Mammary epithelial cell (primary cell): ENCODE measurements at regions of chr11 and their contacts with region 1.

Region 1: GRCh38 chr11:78525709-78526108 is 49.0 kb downstream of the NARS2 start:
- DNase-seq: no peak
- H3K4me3 ChIP-seq: no peak overlapping the region
- H3K27ac ChIP-seq: no peak overlapping the region
- H3K4me1 ChIP-seq: no peaks in the 10 kb centered on the region
- H3K27me3 ChIP-seq: no peaks in the 10 kb centered on the region
- CTCF ChIP-seq: no peak

Region 2: DNA sequence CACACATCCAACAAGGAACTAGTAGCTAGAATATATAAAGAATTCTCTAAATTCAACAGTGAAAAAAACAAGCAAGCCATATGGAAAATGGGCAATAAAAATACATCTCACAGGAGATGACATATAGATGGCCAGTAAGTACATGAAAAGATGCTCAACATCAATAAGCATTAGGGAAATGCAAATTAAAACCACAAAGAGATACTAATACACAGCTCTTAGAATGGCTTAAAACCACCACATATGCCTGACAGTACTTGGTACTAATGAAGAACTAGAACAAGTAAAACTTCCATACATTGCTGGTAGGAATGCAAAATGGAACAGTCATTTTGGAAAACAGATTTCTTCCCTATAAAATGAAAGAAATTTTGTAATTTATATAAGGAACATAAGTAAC is 36.5 kb before region 1 on chr11:
- CTCF ChIA-PET with region 1: interaction called, 25 read pairs
- dilution Hi-C with region 1: no loop called
- in situ Hi-C with region 1: no loop called
- intact Hi-C with region 1: no loop called
- DNase-seq: no peak
- H3K4me3 ChIP-seq: no peak overlapping the region
- H3K27ac ChIP-seq: no peak overlapping the region
- H3K4me1 ChIP-seq: no peaks in the 10 kb centered on the region
- H3K27me3 ChIP-seq: no peaks in the 10 kb centered on the region
- CTCF ChIP-seq: no peak

Region 3: GRCh38 chr11:78549624-78550409 is 24.1 kb after region 1 on chr11:
- CTCF ChIA-PET with region 1: no interaction called
- dilution Hi-C with region 1: no loop called
- in situ Hi-C with region 1: no loop called
- intact Hi-C with region 1: no loop called
- DNase-seq: no peak
- H3K4me3 ChIP-seq: no peak overlapping the region
- H3K27ac ChIP-seq: no peak overlapping the region
- H3K4me1 ChIP-seq: no peaks in the 10 kb centered on the region
- H3K27me3 ChIP-seq: no peaks in the 10 kb centered on the region
- CTCF ChIP-seq: no peak

Region 4: GRCh38 chr11:78595436-78596130 is 69.9 kb after region 1 on chr11:
- CTCF ChIA-PET with region 1: no interaction called
- dilution Hi-C with region 1: no loop called
- in situ Hi-C with region 1: no loop called
- intact Hi-C with region 1: no loop called
- DNase-seq: no peak
- H3K4me3 ChIP-seq: no peak overlapping the region
- H3K27ac ChIP-seq: no peak overlapping the region
- H3K4me1 ChIP-seq: peaks cover 16% of the 10 kb centered on the region
- H3K27me3 ChIP-seq: no peaks in the 10 kb centered on the region
- CTCF ChIP-seq: no peak

Region 5: DNA sequence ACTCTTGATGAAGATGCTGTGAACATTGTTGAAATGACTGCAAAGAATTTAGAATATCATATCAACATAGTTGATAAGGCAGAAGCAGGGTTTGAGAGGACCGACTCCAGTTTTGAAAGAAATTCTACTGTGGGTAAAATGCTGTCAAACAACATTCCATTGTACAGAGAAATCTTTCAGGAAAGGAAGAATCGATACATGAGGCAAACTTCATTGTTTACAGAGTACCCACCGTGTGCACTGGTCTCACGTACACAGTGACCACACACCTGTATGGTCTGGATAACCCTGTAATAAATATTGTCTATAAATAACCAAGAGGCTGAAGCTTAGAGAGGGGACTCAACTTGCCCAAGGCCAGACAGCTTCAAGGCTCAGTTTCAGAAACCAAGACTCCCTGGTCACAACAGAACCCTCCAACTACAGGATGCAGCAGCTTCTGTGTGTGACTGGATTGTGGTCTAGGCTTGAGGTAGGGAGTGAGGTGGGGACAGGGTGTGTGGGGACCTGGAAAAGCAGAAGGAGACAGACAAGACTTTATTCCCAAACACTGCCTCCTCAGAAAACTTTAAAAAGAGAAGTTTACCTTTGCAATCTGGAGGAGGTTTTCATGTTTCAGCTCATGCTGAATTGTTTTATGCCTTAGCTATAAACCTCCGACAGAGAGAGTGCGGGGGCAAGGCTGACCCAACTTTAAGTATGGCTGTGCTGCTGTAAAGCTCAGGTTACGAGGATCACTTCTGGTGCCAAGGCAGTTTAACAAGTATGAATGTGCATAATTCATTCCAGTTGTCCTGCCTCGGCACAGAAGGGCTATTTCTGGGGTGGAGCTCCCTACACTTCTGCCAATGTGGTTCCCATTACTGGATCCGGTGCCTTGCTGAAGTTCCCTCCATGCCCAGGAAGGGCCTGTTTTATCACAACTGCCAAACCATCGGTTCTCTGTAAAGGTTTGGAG is 421.5 kb after region 1 on chr11:
- CTCF ChIA-PET with region 1: no interaction called
- dilution Hi-C with region 1: no loop called
- in situ Hi-C with region 1: no loop called
- intact Hi-C with region 1: no loop called
- DNase-seq: peak; percentile 6
- H3K4me3 ChIP-seq: no peak overlapping the region
- H3K27ac ChIP-seq: no peak overlapping the region
- H3K4me1 ChIP-seq: peaks cover 6% of the 10 kb centered on the region
- H3K27me3 ChIP-seq: no peaks in the 10 kb centered on the region
- CTCF ChIP-seq: no peak